ENCODE measurements at regions of chr17 and their contacts with region 1.

Region 1: DNA sequence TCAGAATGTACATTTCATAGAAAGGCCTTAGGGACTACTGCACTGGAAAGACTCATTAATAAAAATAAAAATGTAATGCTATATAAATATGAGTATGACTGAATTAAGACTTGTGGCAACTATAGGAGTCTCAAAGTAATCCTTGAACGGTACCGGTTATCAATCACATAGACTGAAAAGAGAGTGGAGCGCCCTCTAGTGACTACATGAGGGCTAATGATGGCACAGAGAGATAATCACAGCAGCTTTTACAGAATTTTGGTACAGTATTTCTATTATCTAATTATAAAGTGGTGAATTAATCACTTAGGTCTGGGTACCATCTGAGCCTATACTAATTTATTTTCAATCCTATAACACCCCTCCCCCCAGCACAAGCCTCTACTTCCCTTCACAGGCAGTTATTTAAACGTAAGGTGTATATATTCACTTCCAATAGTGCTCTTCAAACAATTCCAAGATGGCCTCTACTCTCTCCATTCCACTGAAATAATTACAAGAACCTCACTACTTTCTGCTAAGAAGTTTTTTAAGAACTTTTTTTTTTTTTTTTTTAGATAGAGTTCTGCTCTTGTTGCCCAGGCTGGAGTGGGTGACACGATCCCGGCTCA is 40.7 kb upstream of the ANKFY1 start:
- DNase-seq: peak in 5 of 7 donors; percentile 53 to 74 (median 71)
- H3K4me3 ChIP-seq: no peak overlapping the region
- H3K27ac ChIP-seq: no peak overlapping the region
- H3K4me1 ChIP-seq: peaks cover 0 to 1% of the 10 kb centered on the region in 2 donors
- H3K27me3 ChIP-seq: no peaks in the 10 kb centered on the region
- CTCF ChIP-seq: peak; percentile 54 to 75 (median 66)
- POLR2A ChIP-seq: no peak

Region 2: GRCh38 chr17:4215882-4216570 is 88.5 kb before region 1 on chr17:
- intact Hi-C with region 1: loop called in 1 of 2 experiments (anchors 10 kb)
- DNase-seq: no peak
- H3K4me3 ChIP-seq: no peak overlapping the region
- H3K27ac ChIP-seq: no peak overlapping the region
- H3K4me1 ChIP-seq: peaks cover 10 to 32% of the 10 kb centered on the region in 2 donors
- H3K27me3 ChIP-seq: no peaks in the 10 kb centered on the region
- CTCF ChIP-seq: no peak
- POLR2A ChIP-seq: no peak

Region 3: GRCh38 chr17:4354862-4355514 is 50.5 kb after region 1 on chr17:
- intact Hi-C with region 1: loop called (anchors 10 kb)
- DNase-seq: no peak
- H3K4me3 ChIP-seq: no peak overlapping the region
- H3K27ac ChIP-seq: no peak overlapping the region
- H3K4me1 ChIP-seq: peaks cover 4 to 37% of the 10 kb centered on the region in 2 donors
- H3K27me3 ChIP-seq: no peaks in the 10 kb centered on the region
- CTCF ChIP-seq: no peak
- POLR2A ChIP-seq: no peak

Region 4: DNA sequence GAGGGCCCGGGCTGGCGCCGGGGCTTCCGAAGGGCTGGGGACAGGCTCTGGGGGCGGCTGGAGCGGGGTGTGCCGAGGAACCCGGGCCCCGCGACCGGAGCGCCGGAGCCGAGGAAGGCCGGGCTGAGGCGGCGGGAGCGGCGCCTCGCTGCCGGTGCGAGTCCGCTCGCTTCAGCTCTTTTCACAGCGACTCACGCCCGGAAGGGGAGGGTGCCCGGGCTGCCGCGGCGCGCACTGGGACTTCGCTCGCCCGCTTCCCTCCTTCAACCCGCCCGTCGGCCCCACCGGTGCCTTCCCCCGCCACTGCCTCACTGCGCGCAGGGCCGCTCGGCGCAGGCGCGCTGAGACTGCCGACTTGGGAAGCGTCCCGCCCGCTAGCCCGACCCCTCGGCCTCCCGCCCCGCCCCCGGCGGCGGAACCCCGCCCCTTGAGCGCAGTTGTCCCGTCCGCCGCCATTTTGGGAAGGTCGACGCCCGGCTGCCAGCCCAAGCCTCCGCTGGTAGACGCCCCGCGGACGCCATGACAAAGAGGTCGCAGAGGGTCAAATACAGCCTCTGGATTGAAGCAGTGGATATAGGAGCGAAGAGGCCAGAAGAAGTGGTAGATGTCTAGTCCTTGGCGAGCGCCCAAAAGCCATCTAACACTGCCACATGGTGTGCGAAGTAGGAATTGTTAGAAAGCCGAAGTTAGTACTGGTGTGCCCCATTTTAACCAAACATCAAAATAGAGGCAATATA is 62.0 kb after region 1 on chr17 and contains the start of gene UBE2G1:
- intact Hi-C with region 1: loop called in 1 of 2 experiments (anchors 10 kb)
- DNase-seq: peak; percentile 98 to 99 (median 98)
- H3K4me3 ChIP-seq: peak within 1 kb of the TSS; percentile 71 to 99 (median 82)
- H3K27ac ChIP-seq: peak within 1 kb of the TSS; percentile 92 to 99 (median 94)
- H3K4me1 ChIP-seq: peaks cover 11 to 18% of the 10 kb centered on the region in 2 donors
- H3K27me3 ChIP-seq: no peaks in the 10 kb centered on the region
- CTCF ChIP-seq: peak in 5 of 6 experiments; percentile 18 to 47 (median 32)
- POLR2A ChIP-seq: peak; percentile 88 to 98
- total RNA-seq, gene UBE2G1: 40.6 to 63.6 (median 56.1) TPM